ENCODE measurements at regions of chr13 and their contacts with region 1.

Region 1: GRCh38 chr13:76293346-76293745 is 592.9 kb downstream of the KCTD12 start:
- DNase-seq: no peak
- ATAC-seq: no peak

Region 2: GRCh38 chr13:76231522-76232167 is 61.7 kb before region 1 on chr13:
- intact Hi-C with region 1: loop called (anchors 10 kb)
- DNase-seq: no peak
- ATAC-seq: no peak

Measured in Right ventricle myocardium inferior (tissue), 1 donor.